CD8-positive, alpha-beta T cell (primary cell): ENCODE measurements at regions of chr18 and their contacts with region 1.

Region 1: GRCh38 chr18:61076986-61077385 is 256.2 kb upstream of the CDH20 start:
- DNase-seq: no peak
- ATAC-seq: no peak
- H3K4me3 ChIP-seq: no peak overlapping the region
- H3K4me3 Mint-ChIP-seq: no peak overlapping the region
- H3K27ac ChIP-seq: no peak overlapping the region
- H3K27ac Mint-ChIP-seq: no peak overlapping the region
- H3K4me1 ChIP-seq: no peaks in the 10 kb centered on the region
- H3K4me1 Mint-ChIP-seq: no peaks in the 10 kb centered on the region
- H3K27me3 ChIP-seq: no peaks in the 10 kb centered on the region
- H3K27me3 Mint-ChIP-seq: no peaks in the 10 kb centered on the region
- CTCF ChIP-seq: no peak

Region 2: GRCh38 chr18:61107107-61107506 is 30.1 kb after region 1 on chr18:
- CTCF ChIA-PET with region 1: no interaction called
- POLR2A ChIA-PET with region 1: no interaction called
- intact Hi-C with region 1: loop called in 1 of 2 experiments (anchors 1 kb)
- DNase-seq: no peak
- ATAC-seq: no peak
- H3K4me3 ChIP-seq: no peak overlapping the region
- H3K4me3 Mint-ChIP-seq: no peak overlapping the region
- H3K27ac ChIP-seq: no peak overlapping the region
- H3K27ac Mint-ChIP-seq: no peak overlapping the region
- H3K4me1 ChIP-seq: no peaks in the 10 kb centered on the region
- H3K4me1 Mint-ChIP-seq: no peaks in the 10 kb centered on the region
- H3K27me3 ChIP-seq: no peaks in the 10 kb centered on the region
- H3K27me3 Mint-ChIP-seq: no peaks in the 10 kb centered on the region
- CTCF ChIP-seq: no peak

Region 3: DNA sequence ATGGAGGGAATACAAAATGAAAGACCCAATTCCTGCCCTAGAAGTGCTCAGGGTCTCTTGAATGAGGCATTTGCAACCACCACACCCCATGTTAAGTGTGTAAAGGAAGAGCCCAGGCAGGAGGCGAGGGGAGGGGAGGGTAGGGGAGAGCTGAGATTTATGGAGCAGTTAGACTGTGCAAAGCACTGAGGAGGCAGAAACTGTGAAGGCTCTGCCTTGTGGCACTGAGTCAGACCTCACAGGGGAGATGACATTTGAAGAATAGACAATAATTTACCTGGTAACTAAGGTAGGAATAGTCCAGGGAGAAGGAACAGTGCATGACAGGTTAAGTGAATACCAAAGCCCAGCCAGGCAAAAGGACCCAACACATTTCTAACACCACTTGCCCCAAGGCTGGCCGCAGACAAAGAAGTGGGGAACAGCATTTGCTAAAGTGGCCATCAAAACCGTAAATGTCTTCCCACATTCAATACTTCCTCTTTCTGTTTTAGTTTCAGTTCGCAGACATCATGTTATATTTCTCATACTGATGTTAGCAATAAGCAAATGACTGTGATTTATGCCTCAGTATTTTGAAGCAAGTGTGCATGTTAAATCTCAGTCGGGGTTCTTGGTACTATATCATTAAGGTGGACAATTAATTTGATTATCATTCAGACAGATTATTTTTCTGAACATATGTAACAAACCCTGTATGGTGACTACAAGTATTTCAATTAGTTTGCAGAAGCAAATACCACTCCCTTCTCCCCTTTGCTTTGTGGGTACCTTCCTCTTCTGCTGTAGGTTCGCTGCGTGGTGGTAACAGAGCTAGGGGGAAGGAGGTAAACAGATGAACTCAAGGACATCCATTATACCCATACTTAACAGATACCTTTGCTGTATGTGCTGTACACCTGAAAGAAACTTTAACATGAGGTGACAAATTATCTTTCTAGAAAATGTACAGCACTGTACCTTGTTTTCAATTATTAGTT is 283.7 kb after region 1 on chr18:
- CTCF ChIA-PET with region 1: no interaction called
- POLR2A ChIA-PET with region 1: no interaction called
- intact Hi-C with region 1: no loop called
- DNase-seq: no peak
- ATAC-seq: no peak
- H3K4me3 ChIP-seq: no peak overlapping the region
- H3K4me3 Mint-ChIP-seq: no peak overlapping the region
- H3K27ac ChIP-seq: no peak overlapping the region
- H3K27ac Mint-ChIP-seq: no peak overlapping the region
- H3K4me1 ChIP-seq: no peaks in the 10 kb centered on the region
- H3K4me1 Mint-ChIP-seq: peaks cover 6% of the 10 kb centered on the region
- H3K27me3 ChIP-seq: no peaks in the 10 kb centered on the region
- H3K27me3 Mint-ChIP-seq: no peaks in the 10 kb centered on the region
- CTCF ChIP-seq: no peak

Region 4: GRCh38 chr18:61651883-61652268 is 574.9 kb after region 1 on chr18:
- CTCF ChIA-PET with region 1: no interaction called
- POLR2A ChIA-PET with region 1: no interaction called
- intact Hi-C with region 1: no loop called
- DNase-seq: no peak
- ATAC-seq: no peak
- H3K4me3 ChIP-seq: no peak overlapping the region
- H3K4me3 Mint-ChIP-seq: no peak overlapping the region
- H3K27ac ChIP-seq: no peak overlapping the region
- H3K27ac Mint-ChIP-seq: no peak overlapping the region
- H3K4me1 ChIP-seq: no peaks in the 10 kb centered on the region
- H3K4me1 Mint-ChIP-seq: no peaks in the 10 kb centered on the region
- H3K27me3 ChIP-seq: no peaks in the 10 kb centered on the region
- H3K27me3 Mint-ChIP-seq: peaks cover 6% of the 10 kb centered on the region
- CTCF ChIP-seq: no peak